PC-3 (cell line): ENCODE measurements at regions of chr4 and their contacts with region 1.

Region 1: GRCh38 chr4:123838474-123838873 is 441.9 kb downstream of the SPRY1 start:
- DNase-seq: peak; percentile 2
- ATAC-seq: no peak
- H3K4me3 ChIP-seq: no peak overlapping the region
- H3K27ac ChIP-seq: no peak overlapping the region
- H3K4me1 ChIP-seq: peaks cover 13% of the 10 kb centered on the region
- H3K27me3 ChIP-seq: no peaks in the 10 kb centered on the region
- CTCF ChIP-seq: no peak

Region 2: GRCh38 chr4:123770884-123771283 is 67.6 kb before region 1 on chr4:
- CTCF ChIA-PET with region 1: no interaction called
- POLR2A ChIA-PET with region 1: no interaction called
- intact Hi-C with region 1: loop called (anchors 5 kb)
- DNase-seq: no peak
- ATAC-seq: no peak
- H3K4me3 ChIP-seq: no peak overlapping the region
- H3K27ac ChIP-seq: no peak overlapping the region
- H3K4me1 ChIP-seq: no peaks in the 10 kb centered on the region
- H3K27me3 ChIP-seq: no peaks in the 10 kb centered on the region
- CTCF ChIP-seq: no peak